Naive thymus-derived CD8-positive, alpha-beta T cell (primary cell): ENCODE measurements at regions of chr1 and their contacts with region 1.

Region 1: DNA sequence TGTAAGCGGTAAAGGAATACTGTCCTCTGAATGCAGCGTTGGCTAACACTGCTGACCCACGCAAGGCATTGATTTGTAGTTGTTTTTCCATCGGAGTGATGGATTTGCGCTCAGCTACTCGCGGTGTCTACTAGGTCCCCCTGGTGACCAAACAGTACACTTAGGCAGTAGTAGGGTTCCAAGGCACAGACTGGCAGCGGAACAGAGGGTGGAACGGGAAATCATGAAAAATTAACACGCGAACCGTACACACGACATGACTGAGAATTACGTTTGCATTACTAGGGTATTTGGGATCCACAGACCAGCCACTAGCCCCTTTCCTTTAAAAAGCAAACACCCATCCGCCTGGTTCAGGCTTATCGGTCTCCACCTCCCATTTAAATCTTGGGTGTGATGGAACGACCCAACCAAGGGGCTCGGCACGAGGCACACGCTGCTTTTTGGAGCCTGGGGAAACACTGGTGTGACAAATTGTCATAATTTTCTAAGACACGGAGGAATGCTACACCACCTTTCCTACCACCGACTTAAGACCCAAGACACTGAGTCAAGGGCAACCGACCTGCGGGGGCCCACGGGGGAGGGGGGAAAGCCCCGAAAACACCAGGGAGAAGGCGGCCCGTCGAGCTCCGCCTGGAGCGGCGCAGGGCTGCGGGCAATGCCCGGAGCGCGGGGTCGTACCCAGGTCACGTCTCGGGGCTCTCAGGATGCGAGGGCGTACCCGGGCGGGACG is 699 bp downstream of the DIPK1A start:
- DNase-seq: peak; percentile 16 to 82 (median 68)
- ATAC-seq: peak; percentile 41 to 54
- H3K4me3 Mint-ChIP-seq: peak overlapping the region in 9 of 10 donors; percentile 89 to 96 (median 94)
- H3K27ac Mint-ChIP-seq: peak overlapping the region; percentile 95 to 99 (median 98)
- H3K4me1 Mint-ChIP-seq: peaks cover 21 to 44% (median 43%) of the 10 kb centered on the region in 4 donors
- H3K27me3 Mint-ChIP-seq: no peaks in the 10 kb centered on the region

Region 2: DNA sequence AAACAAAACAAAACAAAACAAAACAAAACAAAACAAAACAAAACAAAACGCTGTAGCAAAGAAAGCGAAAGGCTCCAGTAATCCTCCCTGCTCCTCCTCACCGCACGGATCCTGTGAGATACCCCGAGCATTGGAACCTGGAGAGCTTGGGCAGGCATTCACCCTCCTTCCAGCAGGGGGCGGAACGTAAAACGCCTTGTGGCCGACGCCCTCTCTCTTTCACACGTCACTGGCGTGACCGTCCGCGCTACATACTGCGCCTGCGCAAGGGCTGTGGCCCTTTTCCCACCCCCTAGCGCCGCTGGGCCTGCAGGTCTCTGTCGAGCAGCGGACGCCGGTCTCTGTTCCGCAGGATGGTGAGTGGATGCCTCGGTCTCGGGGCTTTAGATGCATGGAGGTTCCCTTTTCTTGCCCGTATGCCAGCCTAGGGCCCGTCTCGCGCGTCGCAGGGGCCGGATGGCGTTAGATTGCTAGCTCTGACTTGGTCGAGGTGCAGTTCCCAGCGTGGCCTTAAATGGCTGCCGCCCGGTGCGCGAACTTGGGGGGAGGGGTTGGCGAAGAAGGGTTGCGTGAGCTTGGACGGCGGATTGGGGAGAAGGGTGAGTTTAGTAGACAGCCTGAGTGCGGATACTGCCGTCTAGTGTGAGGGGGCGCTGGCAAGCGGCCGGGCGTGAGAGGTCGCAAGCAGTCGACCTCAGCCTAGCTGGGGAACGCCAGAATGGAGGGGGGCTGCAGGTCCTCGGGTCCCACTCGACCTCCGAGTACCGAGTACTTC is 128.6 kb before region 1 on chr1 and contains the start of gene RPL5:
- POLR2A ChIA-PET with region 1: interaction called, 34 read pairs
- DNase-seq: peak; percentile 91 to 100 (median 98)
- ATAC-seq: peak; percentile 83 to 85
- H3K4me3 Mint-ChIP-seq: peak within 1 kb of the TSS; percentile 94 to 100 (median 98)
- H3K27ac Mint-ChIP-seq: peak within 1 kb of the TSS; percentile 96 to 100 (median 98)
- H3K4me1 Mint-ChIP-seq: peaks cover 18 to 53% (median 49%) of the 10 kb centered on the region in 4 donors
- H3K27me3 Mint-ChIP-seq: no peaks in the 10 kb centered on the region
- polyA plus RNA-seq, gene RPL5: 3,250 to 3,560 (median 3,276) TPM

Region 3: DNA sequence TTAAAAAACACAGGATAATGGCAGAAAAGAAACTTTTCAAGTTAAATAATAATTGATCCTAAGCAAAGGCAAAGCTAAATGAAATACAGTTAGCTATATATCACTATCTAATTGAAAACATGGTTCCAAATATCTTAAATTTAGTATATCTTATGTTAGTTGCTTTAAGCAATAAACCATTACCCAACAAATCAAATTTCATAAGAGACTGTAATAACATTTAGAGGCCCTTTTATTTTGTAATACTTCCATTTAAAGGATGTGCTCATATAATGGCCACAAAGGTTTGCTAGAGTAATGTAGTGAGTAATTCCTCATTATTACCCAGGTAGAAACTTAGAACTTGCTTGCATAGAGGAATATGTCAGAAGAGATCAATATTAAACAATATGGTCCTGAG is 96.4 kb before region 1 on chr1:
- POLR2A ChIA-PET with region 1: interaction called, 56 read pairs
- DNase-seq: no peak
- ATAC-seq: no peak
- H3K4me3 Mint-ChIP-seq: no peak overlapping the region
- H3K27ac Mint-ChIP-seq: no peak overlapping the region
- H3K4me1 Mint-ChIP-seq: peaks cover 2 to 9% (median 4%) of the 10 kb centered on the region in 4 donors
- H3K27me3 Mint-ChIP-seq: no peaks in the 10 kb centered on the region

Region 4: GRCh38 chr1:92944901-92945747 is 15.4 kb before region 1 on chr1:
- POLR2A ChIA-PET with region 1: interaction called, 20 read pairs
- DNase-seq: no peak
- ATAC-seq: no peak
- H3K4me3 Mint-ChIP-seq: peak overlapping the region in 5 of 10 donors; percentile 4 to 59 (median 50)
- H3K27ac Mint-ChIP-seq: peak overlapping the region in 3 of 10 donors; percentile 2 to 78 (median 63)
- H3K4me1 Mint-ChIP-seq: peaks cover 30 to 67% (median 53%) of the 10 kb centered on the region in 4 donors
- H3K27me3 Mint-ChIP-seq: no peaks in the 10 kb centered on the region

Region 5: DNA sequence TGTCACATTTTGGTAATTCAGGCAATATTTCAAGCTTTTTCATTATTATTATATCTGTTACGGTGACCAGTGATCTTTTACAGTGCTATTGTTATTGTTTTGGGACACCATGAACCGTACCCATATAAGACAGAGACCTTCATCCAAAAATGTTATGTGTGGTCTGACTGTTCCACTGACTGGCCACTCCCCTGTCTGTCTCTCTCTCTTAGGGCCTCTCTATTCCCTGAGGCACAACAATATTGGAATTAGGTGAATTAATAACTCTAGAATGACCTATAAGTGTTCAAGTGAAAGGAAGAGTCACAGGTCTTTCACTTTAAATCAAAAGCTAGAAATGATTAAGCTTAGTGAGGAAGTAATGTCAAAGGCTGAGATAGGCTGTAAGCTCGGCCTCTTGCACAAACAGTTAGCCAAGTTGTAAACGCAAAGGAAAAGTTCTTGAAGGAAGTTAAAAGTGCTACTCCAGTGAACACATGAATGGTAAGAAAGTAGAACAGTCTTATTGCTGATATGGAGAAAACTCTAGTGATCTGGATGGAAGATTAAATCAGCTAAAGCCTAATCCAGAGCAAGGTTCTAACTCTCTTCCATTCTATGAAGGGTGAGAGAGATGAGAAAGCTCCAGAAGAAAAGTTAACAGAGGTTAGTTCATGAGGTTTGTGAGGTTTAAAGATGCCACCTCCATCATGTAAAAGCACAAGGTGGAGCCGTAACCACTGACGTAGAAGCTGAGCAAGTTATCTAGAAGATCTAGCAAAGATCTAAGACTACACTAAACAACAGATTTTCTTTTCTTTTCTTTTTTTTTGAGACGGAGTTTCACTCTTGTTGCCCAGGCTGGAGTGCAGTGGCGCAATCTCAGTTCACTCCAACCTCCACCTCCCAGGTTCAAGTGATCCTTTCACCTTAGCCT is 20.4 kb after region 1 on chr1:
- POLR2A ChIA-PET with region 1: interaction called, 38 read pairs
- DNase-seq: peak in 8 of 10 donors; percentile 60 to 90 (median 82)
- ATAC-seq: peak; percentile 95
- H3K4me3 Mint-ChIP-seq: peak overlapping the region; percentile 48 to 81 (median 62)
- H3K27ac Mint-ChIP-seq: peak overlapping the region; percentile 93 to 99 (median 97)
- H3K4me1 Mint-ChIP-seq: peaks cover 5 to 49% (median 21%) of the 10 kb centered on the region in 4 donors
- H3K27me3 Mint-ChIP-seq: no peaks in the 10 kb centered on the region

Region 6: GRCh38 chr1:93078986-93079654 is 118.6 kb after region 1 on chr1 and contains the start of gene MTF2:
- POLR2A ChIA-PET with region 1: interaction called, 34 read pairs
- DNase-seq: peak; percentile 83 to 95 (median 90)
- ATAC-seq: peak; percentile 83 to 88
- H3K4me3 Mint-ChIP-seq: peak within 1 kb of the TSS; percentile 90 to 100 (median 97)
- H3K27ac Mint-ChIP-seq: peak within 1 kb of the TSS; percentile 88 to 99 (median 99)
- H3K4me1 Mint-ChIP-seq: peaks cover 15 to 60% (median 42%) of the 10 kb centered on the region in 4 donors
- H3K27me3 Mint-ChIP-seq: no peaks in the 10 kb centered on the region
- polyA plus RNA-seq, gene MTF2: 53.0 to 67.7 (median 61.0) TPM